Activated CD4-positive, alpha-beta memory T cell treated with anti-CD3 and anti-CD28 coated beads for 36 hours (primary cell): ENCODE measurements at regions of chr10 and their contacts with region 1.

Region 1: GRCh38 chr10:45220931-45221330 is 94.5 kb downstream of the OR13A1 start:
- DNase-seq: no peak
- H3K4me3 Mint-ChIP-seq: no peak overlapping the region
- H3K27ac Mint-ChIP-seq: no peak overlapping the region
- H3K4me1 Mint-ChIP-seq: no peaks in the 10 kb centered on the region
- H3K27me3 Mint-ChIP-seq: no peaks in the 10 kb centered on the region

Region 2: DNA sequence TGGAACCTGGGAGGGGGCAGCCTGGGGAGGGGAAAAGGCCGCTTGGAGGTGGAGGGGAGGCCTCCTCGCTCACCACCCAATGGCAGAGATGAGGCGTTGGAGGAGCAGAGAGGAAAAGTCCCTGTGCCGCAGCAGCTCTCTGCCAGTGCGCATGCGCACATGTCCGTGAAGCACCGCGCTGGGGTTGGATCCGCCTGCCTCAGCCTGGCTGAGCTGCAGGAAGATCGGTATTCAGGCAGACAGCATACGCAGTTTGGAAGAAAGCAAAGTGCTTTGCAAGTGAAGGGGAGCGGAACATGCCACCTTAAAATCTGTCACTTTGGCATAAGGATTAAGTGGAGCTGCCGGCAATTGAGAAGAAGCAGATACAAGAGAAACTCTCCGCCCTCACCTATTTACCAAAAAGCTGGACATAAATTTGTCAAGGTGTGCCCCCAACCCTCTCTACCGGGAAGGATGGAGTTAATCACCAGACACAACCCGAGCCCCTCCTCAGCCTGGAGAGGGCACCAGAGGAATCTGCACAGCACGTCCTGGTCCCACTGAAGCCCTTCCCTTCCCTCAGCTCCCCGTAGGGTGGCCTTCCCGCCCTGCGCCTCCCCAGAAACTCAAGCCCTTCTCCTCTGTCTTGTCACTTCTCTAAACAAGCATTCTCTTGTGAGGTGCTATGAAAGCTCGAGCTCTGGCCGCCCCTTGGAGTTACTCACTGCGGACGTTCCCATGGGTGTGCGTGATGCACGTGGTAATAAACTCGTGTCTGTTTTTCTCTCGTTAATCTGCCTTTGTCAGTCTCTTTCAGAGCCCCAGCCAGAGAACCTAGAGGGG is 342.0 kb before region 1 on chr10:
- CTCF ChIA-PET with region 1: no interaction called
- POLR2A ChIA-PET with region 1: no interaction called
- intact Hi-C with region 1: no loop called
- DNase-seq: peak; percentile 86
- H3K4me3 Mint-ChIP-seq: peak overlapping the region; percentile 82
- H3K27ac Mint-ChIP-seq: peak overlapping the region; percentile 52
- H3K4me1 Mint-ChIP-seq: peaks cover 10% of the 10 kb centered on the region
- H3K27me3 Mint-ChIP-seq: peaks cover 8% of the 10 kb centered on the region

Region 3: DNA sequence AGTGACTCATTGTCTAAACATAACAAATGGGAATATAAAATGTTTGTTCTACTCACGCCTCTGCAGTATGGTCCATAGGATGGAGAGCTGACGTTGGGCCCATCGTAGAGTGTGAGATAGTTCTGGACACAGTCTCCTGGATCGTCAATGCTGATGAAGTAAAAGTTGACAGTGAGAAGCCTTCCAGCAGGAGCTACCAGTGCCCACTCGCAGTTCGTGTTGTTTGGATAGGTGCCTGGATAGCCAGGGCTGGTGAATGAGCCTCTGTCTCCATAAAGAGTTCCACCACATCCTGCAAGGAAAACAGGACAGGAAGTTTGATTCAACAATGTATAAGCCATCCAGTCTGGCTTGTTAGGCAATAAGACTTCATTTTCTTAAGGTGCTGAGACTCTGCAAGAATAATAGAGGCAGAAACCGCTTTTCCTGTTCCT is 14.9 kb after region 1 on chr10:
- CTCF ChIA-PET with region 1: interaction called, 15 read pairs
- POLR2A ChIA-PET with region 1: no interaction called
- intact Hi-C with region 1: no loop called
- DNase-seq: no peak
- H3K4me3 Mint-ChIP-seq: no peak overlapping the region
- H3K27ac Mint-ChIP-seq: no peak overlapping the region
- H3K4me1 Mint-ChIP-seq: no peaks in the 10 kb centered on the region
- H3K27me3 Mint-ChIP-seq: peaks cover 8% of the 10 kb centered on the region

Region 4: GRCh38 chr10:45256246-45256645 is 35.3 kb after region 1 on chr10:
- CTCF ChIA-PET with region 1: no interaction called
- POLR2A ChIA-PET with region 1: no interaction called
- intact Hi-C with region 1: no loop called
- DNase-seq: no peak
- H3K4me3 Mint-ChIP-seq: no peak overlapping the region
- H3K27ac Mint-ChIP-seq: no peak overlapping the region
- H3K4me1 Mint-ChIP-seq: peaks cover 7% of the 10 kb centered on the region
- H3K27me3 Mint-ChIP-seq: peaks cover under 1% of the 10 kb centered on the region